Right ventricle myocardium superior (tissue), 1 donor: ENCODE measurements at regions of chr1 and their contacts with region 1.

Region 1: DNA sequence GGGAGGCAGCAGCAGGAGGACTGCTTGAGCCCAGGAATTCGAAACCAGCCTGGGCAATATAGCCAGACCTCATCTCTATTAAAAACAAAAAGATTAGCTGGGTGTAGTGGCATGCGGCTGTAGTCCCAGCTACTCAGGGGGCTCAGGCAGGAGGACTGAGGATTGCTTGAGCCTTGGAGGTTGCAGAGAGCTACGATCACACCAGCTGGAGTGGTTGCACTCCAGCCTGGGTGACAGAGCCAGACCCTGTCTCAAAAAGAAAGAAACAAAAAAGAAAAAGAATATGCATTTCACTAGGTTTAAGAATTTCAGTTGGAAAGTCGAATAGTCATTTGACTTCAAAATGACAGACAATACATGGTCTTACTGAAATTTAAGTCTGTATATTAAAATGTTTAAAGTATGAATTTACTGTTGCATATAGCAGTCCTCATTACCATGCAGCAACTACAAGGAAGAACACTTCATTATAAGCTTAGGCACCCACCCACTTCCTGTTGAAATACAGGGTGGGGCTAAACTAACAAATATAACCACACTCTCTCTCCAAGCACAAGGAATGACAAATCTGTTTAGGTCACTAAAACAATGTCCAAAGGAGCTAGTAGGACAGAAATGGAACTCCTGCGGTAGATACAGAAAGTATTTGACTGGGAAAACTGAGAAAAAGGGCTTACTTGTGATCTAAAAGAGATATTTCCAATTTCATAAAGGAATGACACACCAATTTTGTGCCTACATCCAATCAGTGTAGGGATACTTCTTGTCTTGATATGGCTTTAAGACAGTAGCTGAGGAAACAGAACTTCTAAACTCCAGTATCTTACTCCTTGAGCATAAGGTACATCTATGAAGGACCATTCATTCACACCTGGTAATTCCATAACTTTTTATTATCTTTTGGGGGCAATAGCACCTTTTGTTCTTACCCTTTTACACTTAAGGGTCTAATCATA is 44.1 kb downstream of the GPR3 start:
- DNase-seq: no peak
- ATAC-seq: peak; percentile 76

Region 2: GRCh38 chr1:26991310-26992116 is 445.0 kb before region 1 on chr1:
- intact Hi-C with region 1: no loop called
- DNase-seq: no peak
- ATAC-seq: no peak

Region 3: GRCh38 chr1:27372808-27373690 is 63.4 kb before region 1 on chr1:
- intact Hi-C with region 1: no loop called
- DNase-seq: no peak
- ATAC-seq: no peak

Region 4: DNA sequence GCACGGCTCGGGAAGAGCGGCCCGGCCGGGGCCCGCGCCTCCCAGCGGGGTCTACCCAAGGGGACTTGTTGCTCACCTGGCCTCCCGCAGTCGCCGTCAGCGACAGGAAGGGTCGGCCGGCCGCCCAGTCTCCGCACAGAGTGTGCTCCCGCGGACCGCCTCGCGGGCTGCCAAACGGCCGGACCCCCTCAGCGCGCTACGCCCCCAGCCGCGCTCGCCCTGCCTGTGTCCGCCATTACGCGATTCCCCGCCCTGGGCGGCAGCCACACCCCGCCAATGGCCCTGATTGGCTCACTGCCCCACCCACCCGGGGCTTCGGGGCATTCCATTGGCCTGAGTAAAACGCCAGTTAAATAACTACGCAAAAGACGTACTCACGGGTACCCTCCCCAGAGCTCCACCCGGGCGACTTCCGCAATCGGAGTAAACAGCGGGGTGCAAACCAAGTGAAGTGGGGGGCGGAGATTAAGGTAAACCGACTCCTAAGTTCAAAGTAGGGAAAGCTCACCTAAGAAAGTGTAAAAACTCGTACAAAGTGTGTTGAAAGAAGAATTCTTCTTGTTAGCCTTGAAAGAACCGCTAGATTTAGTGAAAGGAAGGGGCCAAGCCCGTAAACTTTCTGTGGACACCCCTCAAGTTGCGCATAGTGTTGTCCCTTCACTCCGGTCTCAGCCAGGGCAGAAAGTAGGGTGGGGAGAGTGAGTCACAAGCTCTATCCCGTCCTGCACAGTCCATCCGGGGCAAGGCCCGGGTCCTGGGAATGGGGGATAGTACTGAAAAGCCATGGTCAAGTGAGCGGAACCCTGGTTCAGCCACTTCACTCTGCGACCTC is 53.6 kb after region 1 on chr1 and contains the start of gene WASF2:
- intact Hi-C with region 1: loop called (anchors 10 kb)
- DNase-seq: peak; percentile 98
- ATAC-seq: peak; percentile 96
- total RNA-seq, gene WASF2: 49.3 TPM